Caco-2 (cell line): ENCODE measurements at regions of chrX and their contacts with region 1.

Region 1: GRCh38 chrX:43640482-43640881 is 15.6 kb upstream of the MAOA start:
- DNase-seq: no peak
- H3K4me3 ChIP-seq: no peak overlapping the region
- H3K4me3 Mint-ChIP-seq: no peak overlapping the region
- H3K27ac Mint-ChIP-seq: no peak overlapping the region
- H3K4me1 ChIP-seq: 0 out of 2 replicates have a peak, but pooled peaks cover 3% of the 10 kb centered on the region
- H3K4me1 Mint-ChIP-seq: peaks cover 5% of the 10 kb centered on the region
- H3K27me3 ChIP-seq: no peaks in the 10 kb centered on the region
- H3K27me3 Mint-ChIP-seq: no peaks in the 10 kb centered on the region
- CTCF ChIP-seq: no peak

Region 2: GRCh38 chrX:42776195-42776594 is 864.3 kb before region 1 on chrX:
- CTCF ChIA-PET with region 1: interaction called, 11 read pairs
- POLR2A ChIA-PET with region 1: no interaction called
- intact Hi-C with region 1: no loop called
- DNase-seq: no peak
- H3K4me3 ChIP-seq: no peak overlapping the region
- H3K4me3 Mint-ChIP-seq: no peak overlapping the region
- H3K27ac Mint-ChIP-seq: no peak overlapping the region
- H3K4me1 ChIP-seq: no peaks in the 10 kb centered on the region
- H3K4me1 Mint-ChIP-seq: peaks cover 8% of the 10 kb centered on the region
- H3K27me3 ChIP-seq: no peaks in the 10 kb centered on the region
- H3K27me3 Mint-ChIP-seq: no peaks in the 10 kb centered on the region
- CTCF ChIP-seq: no peak